HCT116 (cell line): ENCODE measurements at regions of chr10 and their contacts with region 1.

Region 1: GRCh38 chr10:102917962-102918816 is at the start of gene CNNM2:
- DNase-seq: peak; percentile 100
- ATAC-seq: peak; percentile 87
- H3K4me3 ChIP-seq: peak within 1 kb of the TSS; percentile 71 to 85
- H3K27ac ChIP-seq: peak within 1 kb of the TSS; percentile 77
- H3K4me1 ChIP-seq: peaks cover 12 to 24% of the 10 kb centered on the region in 2 experiments
- H3K27me3 ChIP-seq: no peaks in the 10 kb centered on the region
- CTCF ChIP-seq: no peak
- POLR2A ChIP-seq: peak; percentile 86
- RAD21 ChIP-seq: no peak
- total RNA-seq, gene CNNM2: 23.1 TPM

Region 2: DNA sequence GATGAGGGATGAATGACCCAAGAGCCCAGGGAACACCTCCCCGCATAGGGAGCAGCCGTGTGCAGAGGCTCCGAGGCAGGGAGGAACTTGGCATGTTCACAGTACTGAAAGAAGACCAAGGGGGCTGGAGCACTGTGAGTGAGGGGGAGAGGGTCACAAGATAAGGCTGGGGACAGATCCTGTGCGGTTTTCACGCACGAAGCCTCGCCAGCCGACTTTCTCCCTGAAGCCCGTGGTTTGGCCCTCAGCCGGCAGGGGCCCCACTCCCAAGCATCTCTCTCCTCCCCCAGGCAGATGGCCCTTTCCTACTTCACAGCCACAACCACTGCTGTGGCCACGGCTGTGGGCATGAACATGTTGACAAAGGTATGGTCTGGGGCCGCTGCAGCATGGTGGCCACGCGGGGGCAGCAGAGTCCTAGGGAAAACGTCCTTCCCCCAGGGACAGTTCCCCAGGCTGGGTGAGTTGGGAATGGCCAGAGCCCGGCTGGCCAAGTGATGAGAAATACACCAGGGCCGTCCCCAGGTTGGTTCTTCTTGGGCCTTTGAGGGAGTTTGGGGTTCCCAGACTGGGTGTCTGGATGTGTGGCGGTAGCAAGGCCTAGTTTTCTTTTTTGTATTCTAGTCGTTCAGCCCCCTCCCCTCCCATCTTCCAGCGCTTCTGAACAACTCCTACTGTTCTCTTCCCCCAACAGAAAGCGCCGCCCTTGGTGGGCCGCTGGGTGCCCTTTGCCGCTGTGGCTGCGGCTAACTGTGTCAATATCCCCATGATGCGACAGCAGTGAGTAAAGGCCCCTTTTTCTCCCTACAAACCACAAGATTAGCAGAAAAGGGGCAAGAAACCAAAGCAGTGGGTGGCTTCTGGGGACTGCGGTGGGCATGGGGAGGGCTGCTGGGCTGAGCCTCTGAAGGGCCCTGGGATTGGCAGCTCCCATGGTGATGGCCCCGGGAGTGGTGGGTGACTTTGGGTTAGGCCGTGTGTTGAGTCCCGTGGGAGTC is 188.9 kb before region 1 on chr10:
- CTCF ChIA-PET with region 1: no interaction called
- POLR2A ChIA-PET with region 1: no interaction called
- RAD21 ChIA-PET with region 1: no interaction called
- intact Hi-C with region 1: loop called (anchors 5 kb)
- DNase-seq: peak; percentile 49
- ATAC-seq: peak; percentile 99
- H3K4me3 ChIP-seq: no peak overlapping the region
- H3K27ac ChIP-seq: no peak overlapping the region
- H3K4me1 ChIP-seq: no peaks in the 10 kb centered on the region
- H3K27me3 ChIP-seq: no peaks in the 10 kb centered on the region
- CTCF ChIP-seq: peak; percentile 83 to 99 (median 99)
- POLR2A ChIP-seq: no peak
- RAD21 ChIP-seq: peak; percentile 95

Region 3: GRCh38 chr10:102853944-102854694 is 64.1 kb before region 1 on chr10 and contains the start of gene BORCS7:
- CTCF ChIA-PET with region 1: no interaction called
- POLR2A ChIA-PET with region 1: no interaction called
- RAD21 ChIA-PET with region 1: no interaction called
- intact Hi-C with region 1: no loop called
- DNase-seq: peak; percentile 99
- ATAC-seq: peak; percentile 97
- H3K4me3 ChIP-seq: peak within 1 kb of the TSS; percentile 68 to 83
- H3K27ac ChIP-seq: peak within 1 kb of the TSS; percentile 88
- H3K4me1 ChIP-seq: peaks cover 17% of the 10 kb centered on the region in 2 experiments
- H3K27me3 ChIP-seq: no peaks in the 10 kb centered on the region
- CTCF ChIP-seq: no peak
- POLR2A ChIP-seq: peak; percentile 88
- RAD21 ChIP-seq: no peak
- total RNA-seq, gene BORCS7: 15.9 TPM

Region 4: GRCh38 chr10:103062604-103063590 is 144.7 kb after region 1 on chr10:
- CTCF ChIA-PET with region 1: interaction called, 42 read pairs
- POLR2A ChIA-PET with region 1: interaction called, 5 read pairs
- RAD21 ChIA-PET with region 1: interaction called, 5 to 16 read pairs
- intact Hi-C with region 1: no loop called
- DNase-seq: no peak
- ATAC-seq: peak; percentile 74
- H3K4me3 ChIP-seq: no peak overlapping the region
- H3K27ac ChIP-seq: no peak overlapping the region
- H3K4me1 ChIP-seq: no peaks in the 10 kb centered on the region
- H3K27me3 ChIP-seq: no peaks in the 10 kb centered on the region
- CTCF ChIP-seq: peak; percentile 18 to 46 (median 39); a peak in 4 of 6 replicates
- POLR2A ChIP-seq: no peak
- RAD21 ChIP-seq: peak; percentile 63

Region 5: DNA sequence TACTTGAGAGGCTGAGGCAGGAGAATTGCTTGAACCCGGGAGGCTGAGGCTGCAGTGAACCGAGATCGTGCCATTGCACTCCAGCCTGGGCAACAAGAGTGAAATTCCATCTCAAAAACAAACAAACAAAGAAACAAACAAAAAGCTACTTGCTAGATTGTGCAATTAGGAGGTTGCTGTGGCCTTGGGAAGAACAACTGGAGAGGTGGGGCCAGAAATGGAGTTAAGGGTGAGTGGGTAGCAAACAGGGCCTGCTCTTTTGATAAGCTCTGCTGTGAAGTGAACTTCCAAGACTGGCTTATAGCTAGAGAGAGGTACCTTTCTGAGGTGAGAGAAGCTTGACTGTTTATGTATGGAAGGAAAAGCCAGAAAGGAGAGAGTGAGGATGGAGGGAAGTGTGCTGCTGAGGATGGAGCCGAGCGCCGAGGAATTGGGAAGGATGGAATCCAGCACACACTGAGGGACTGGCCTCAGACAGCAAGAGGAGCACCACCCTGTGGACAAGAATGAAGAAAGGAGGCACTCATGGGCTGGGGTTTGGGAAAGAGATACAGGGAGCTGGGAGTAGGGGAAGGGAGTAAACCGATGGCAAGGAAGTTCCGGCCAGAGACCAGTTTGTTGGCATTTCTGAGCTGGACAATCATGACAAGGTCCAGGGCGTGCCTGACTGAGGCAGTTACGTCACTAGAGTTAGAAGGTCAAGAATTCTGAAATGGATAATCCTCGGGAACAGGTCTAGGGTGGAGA is 320.5 kb after region 1 on chr10:
- CTCF ChIA-PET with region 1: interaction called, 59 read pairs
- POLR2A ChIA-PET with region 1: no interaction called
- RAD21 ChIA-PET with region 1: interaction called in 1 of 2 experiments, 27 read pairs
- intact Hi-C with region 1: no loop called
- DNase-seq: peak; percentile 84
- ATAC-seq: peak; percentile 80
- H3K4me3 ChIP-seq: peak overlapping the region in 1 of 2 experiments; percentile 4; a peak in 1 of 4 replicates
- H3K27ac ChIP-seq: peak overlapping the region; percentile 44
- H3K4me1 ChIP-seq: peaks cover 44 to 52% of the 10 kb centered on the region in 2 experiments
- H3K27me3 ChIP-seq: no peaks in the 10 kb centered on the region
- CTCF ChIP-seq: peak in 2 of 3 experiments; percentile 60; a peak in 4 of 6 replicates
- POLR2A ChIP-seq: no peak
- RAD21 ChIP-seq: no peak

Region 6: DNA sequence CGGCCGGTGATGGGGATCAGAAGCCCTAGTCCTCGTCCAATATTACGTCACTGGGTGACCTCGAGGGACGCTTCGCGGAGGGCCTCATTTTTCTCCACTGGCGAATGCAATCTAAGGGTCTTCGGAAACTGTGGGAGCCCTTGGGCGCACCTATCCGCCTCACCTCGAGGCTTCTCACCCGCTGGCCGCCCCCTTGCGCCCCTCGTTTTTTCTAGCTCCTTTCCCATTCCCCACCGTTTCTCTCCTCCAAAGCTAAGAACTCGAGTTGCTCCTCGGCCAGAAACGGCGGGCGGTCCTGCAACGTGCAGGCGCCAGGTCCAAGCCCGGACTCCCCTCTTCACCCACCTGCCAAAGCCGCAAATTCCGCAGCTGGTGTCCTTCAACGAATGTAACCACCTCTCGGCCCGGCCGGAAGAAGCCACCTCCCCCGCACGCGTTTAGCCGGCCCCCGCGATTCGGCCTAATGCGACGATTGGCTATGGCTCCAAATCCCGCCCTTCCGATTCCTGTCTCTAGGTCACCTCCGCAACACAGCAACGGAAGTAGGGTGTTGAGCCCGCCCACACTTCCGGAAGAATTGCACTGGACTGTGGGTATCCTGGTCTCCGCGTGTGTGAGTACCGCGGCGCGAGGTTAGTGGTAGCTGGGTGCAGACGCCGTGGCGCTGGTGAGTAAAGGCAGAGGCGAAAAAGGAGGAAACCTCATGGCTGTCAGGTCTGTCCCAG is 478.0 kb after region 1 on chr10 and contains the starts of genes ATP5MK and PDCD11:
- CTCF ChIA-PET with region 1: no interaction called
- POLR2A ChIA-PET with region 1: no interaction called
- RAD21 ChIA-PET with region 1: no interaction called
- intact Hi-C with region 1: loop called (anchors 1 kb)
- DNase-seq: peak; percentile 98
- ATAC-seq: peak; percentile 99
- H3K4me3 ChIP-seq: peak within 1 kb of the TSS; percentile 83 to 95
- H3K27ac ChIP-seq: peak within 1 kb of the TSS; percentile 71
- H3K4me1 ChIP-seq: peaks cover 13 to 27% of the 10 kb centered on the region in 2 experiments; a peak in 3 of 4 replicates
- H3K27me3 ChIP-seq: no peaks in the 10 kb centered on the region
- CTCF ChIP-seq: peak in 2 of 3 experiments; percentile 33 to 35; a peak in 3 of 6 replicates
- POLR2A ChIP-seq: peak; percentile 95
- RAD21 ChIP-seq: no peak
- total RNA-seq, gene ATP5MK: 556 TPM
- total RNA-seq, gene PDCD11: 106 TPM